GM23248 (cell line): ENCODE measurements at regions of chr1 and their contacts with region 1.

Region 1: DNA sequence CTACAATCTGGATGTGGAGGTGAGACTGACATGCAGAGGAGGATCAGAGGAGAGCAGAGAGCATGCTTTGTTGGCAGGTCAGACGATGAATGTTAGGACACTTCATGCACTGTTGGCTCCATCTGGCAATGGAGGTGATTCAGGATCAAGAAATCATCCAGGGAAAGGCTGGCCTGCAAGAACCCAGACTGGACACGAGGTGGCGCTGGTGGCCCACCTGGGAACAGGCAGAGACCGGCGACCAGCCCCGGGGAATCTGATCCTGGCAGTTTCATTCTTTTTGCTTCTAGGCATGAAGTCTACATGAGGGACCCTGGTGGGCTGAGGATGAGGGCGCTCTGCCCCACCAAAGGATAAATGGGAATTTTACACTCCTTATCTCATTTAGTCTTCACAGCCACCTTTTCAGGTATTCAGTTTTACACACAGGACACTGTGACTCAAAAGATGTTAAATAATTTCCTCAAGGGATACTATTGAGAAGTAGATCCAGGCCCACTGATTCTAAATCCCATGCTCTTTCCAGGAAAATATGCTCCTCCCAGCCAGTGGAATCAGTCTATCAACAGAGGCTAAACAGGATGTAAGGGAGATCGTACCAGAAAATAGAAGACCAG is 26.2 kb upstream of the SCMH1 start:
- DNase-seq: peak; percentile 85
- H3K4me3 ChIP-seq: no peak overlapping the region
- H3K27ac ChIP-seq: no peak overlapping the region
- H3K4me1 ChIP-seq: no peaks in the 10 kb centered on the region
- H3K27me3 ChIP-seq: no peaks in the 10 kb centered on the region

Region 2: DNA sequence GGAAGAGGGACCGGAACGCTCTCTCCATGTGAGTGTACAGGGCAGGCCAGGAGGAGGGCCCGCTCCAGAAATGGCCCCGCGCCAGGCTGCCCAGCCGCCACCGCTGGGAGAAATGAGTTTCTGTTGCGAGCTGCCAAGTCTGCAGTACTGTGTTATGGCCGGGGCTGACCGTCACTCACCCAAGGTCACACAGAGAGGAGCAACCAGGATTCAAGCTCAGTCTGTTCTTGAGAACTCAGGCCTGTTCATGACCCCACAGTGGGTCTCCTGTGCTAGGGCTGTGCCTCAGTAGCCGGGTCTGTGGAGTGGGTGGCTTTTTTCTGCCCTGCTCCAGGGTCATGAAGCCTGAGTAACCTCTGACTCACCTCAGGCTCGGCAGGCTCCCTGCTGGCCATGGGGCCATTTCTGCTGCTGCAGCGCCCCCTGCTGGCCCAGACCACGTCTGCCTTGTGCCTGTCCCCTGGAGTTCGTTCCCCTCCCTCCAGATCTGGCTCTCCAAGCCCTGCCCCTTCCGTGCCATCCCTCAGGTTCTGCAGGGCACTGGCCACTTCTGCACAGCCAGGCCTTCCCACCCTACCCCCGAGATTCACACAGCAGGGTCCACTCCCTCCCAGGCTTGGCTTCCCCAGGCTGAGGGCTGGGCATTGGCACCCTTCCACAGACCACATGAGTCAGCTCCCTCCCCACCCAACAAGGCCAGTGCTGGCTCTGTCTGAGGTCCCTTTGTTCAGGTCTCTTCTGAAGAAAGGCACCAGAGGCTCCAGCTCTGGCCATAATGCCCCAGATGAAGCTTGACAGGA is 164.4 kb after region 1 on chr1:
- in situ Hi-C with region 1: loop called (anchors 10 kb)
- DNase-seq: peak; percentile 92
- H3K4me3 ChIP-seq: peak overlapping the region; percentile 21; the same call in 1 of the 2 replicates
- H3K27ac ChIP-seq: peak overlapping the region; percentile 6; the same call in 1 of the 2 replicates
- H3K4me1 ChIP-seq: peaks cover 16% of the 10 kb centered on the region
- H3K27me3 ChIP-seq: peaks cover 8% of the 10 kb centered on the region; the same call in 1 of the 2 replicates

Region 3: DNA sequence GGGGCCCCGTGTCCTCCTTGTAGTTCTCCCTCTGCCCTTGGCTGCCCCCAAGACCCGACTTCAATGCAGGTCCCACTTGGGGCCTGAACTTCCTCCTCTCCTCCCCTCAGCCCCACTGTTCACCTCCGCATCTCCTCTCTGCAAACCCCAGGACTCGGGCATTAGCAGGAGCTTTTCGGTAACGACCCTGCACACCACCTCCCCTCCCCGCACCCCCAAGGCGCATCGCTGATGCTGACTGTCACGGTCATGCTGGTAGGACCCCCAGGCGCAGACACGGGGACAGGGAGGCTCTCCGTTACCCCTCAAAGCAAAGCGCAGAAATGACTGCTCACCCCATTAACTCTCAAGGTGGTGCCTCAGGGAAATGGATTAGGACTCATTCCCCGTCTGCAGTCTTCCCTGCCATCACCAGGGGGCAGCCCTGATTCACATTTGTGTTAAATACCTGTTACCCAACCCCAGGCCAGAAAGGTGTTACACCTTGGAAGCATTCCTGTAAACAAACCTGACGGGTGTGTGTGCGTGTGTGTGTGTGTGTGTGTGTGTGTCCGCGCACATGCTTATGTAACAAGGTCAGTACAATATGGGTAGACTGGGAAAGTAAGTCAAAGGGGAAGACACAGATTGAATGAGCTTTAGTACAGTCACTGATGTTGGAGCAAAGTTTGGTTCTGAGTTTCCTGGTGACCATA is 878.5 kb after region 1 on chr1:
- in situ Hi-C with region 1: no loop called
- DNase-seq: peak; percentile 69
- H3K4me3 ChIP-seq: no peak overlapping the region
- H3K27ac ChIP-seq: no peak overlapping the region
- H3K4me1 ChIP-seq: no peaks in the 10 kb centered on the region
- H3K27me3 ChIP-seq: peaks cover 52% of the 10 kb centered on the region